ENCODE measurements at regions of chr6 and their contacts with region 1.

Region 1: GRCh38 chr6:166956444-166957086 is at the start of gene RNASET2:
- DNase-seq: peak; percentile 98
- H3K4me3 Mint-ChIP-seq: peak within 1 kb of the TSS; percentile 92
- H3K27ac Mint-ChIP-seq: peak within 1 kb of the TSS; percentile 91
- H3K4me1 Mint-ChIP-seq: peaks cover 74% of the 10 kb centered on the region
- H3K27me3 Mint-ChIP-seq: no peaks in the 10 kb centered on the region
- total RNA-seq, gene RNASET2: 99.5 TPM in 2 replicates

Region 2: DNA sequence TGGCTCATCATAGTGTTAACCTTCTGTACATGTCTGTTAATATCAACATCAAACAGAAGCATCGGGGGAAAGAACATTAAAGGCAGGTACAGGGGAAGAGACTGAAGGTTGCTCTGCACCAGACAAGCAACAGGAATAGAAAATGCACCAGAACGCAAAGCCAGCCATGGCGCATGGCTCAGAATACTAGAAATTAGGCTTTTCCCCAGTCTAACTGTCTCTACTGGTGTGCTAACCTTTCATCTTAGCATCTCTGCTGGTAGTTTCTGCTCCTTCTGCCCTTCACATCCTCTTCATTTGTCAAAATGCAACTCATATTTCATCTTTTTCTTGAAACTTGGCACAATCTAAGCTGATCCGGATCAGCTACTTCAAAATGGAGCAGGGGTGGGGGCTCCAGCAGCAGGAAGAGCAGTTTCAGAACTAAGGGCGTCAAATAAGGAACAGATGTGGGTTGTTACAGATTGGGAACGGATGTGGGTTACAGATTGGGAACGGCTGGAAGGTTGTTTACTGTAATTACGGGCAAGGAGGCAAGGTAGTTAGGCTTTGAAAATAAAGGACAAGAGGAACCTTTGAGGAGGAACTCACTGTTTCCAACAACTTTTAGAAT is 12.9 kb after region 1 on chr6:
- intact Hi-C with region 1: loop called (anchors 1 kb)
- DNase-seq: no peak
- H3K4me3 Mint-ChIP-seq: peak overlapping the region; percentile 55
- H3K27ac Mint-ChIP-seq: peak overlapping the region; percentile 87
- H3K4me1 Mint-ChIP-seq: peaks cover 51% of the 10 kb centered on the region
- H3K27me3 Mint-ChIP-seq: no peaks in the 10 kb centered on the region